WTC11 (cell line): ENCODE measurements at regions of chr1 and their contacts with region 1.

Region 1: GRCh38 chr1:54499360-54500106 is 48.5 kb upstream of the ACOT11 start:
- DNase-seq: peak; percentile 59
- ATAC-seq: peak; percentile 63
- H3K4me3 Mint-ChIP-seq: peak overlapping the region; percentile 71
- H3K27ac Mint-ChIP-seq: no peak overlapping the region
- H3K4me1 Mint-ChIP-seq: peaks cover 37% of the 10 kb centered on the region
- H3K27me3 Mint-ChIP-seq: no peaks in the 10 kb centered on the region; the same call in 1 of the 2 replicates
- CTCF ChIP-seq: no peak

Region 2: GRCh38 chr1:54453022-54453421 is 46.5 kb before region 1 on chr1:
- CTCF ChIA-PET with region 1: no interaction called
- POLR2A ChIA-PET with region 1: no interaction called
- DNase-seq: no peak
- ATAC-seq: no peak
- H3K4me3 Mint-ChIP-seq: no peak overlapping the region
- H3K27ac Mint-ChIP-seq: no peak overlapping the region
- H3K4me1 Mint-ChIP-seq: peaks cover 10% of the 10 kb centered on the region
- H3K27me3 Mint-ChIP-seq: peaks cover 5% of the 10 kb centered on the region
- CTCF ChIP-seq: no peak

Region 3: GRCh38 chr1:54471588-54471987 is 27.9 kb before region 1 on chr1:
- CTCF ChIA-PET with region 1: no interaction called
- POLR2A ChIA-PET with region 1: no interaction called
- DNase-seq: no peak
- ATAC-seq: peak; percentile 1; the same call in 1 of the 2 replicates
- H3K4me3 Mint-ChIP-seq: no peak overlapping the region
- H3K27ac Mint-ChIP-seq: no peak overlapping the region
- H3K4me1 Mint-ChIP-seq: peaks cover 58% of the 10 kb centered on the region
- H3K27me3 Mint-ChIP-seq: peaks cover 20% of the 10 kb centered on the region
- CTCF ChIP-seq: no peak

Region 4: DNA sequence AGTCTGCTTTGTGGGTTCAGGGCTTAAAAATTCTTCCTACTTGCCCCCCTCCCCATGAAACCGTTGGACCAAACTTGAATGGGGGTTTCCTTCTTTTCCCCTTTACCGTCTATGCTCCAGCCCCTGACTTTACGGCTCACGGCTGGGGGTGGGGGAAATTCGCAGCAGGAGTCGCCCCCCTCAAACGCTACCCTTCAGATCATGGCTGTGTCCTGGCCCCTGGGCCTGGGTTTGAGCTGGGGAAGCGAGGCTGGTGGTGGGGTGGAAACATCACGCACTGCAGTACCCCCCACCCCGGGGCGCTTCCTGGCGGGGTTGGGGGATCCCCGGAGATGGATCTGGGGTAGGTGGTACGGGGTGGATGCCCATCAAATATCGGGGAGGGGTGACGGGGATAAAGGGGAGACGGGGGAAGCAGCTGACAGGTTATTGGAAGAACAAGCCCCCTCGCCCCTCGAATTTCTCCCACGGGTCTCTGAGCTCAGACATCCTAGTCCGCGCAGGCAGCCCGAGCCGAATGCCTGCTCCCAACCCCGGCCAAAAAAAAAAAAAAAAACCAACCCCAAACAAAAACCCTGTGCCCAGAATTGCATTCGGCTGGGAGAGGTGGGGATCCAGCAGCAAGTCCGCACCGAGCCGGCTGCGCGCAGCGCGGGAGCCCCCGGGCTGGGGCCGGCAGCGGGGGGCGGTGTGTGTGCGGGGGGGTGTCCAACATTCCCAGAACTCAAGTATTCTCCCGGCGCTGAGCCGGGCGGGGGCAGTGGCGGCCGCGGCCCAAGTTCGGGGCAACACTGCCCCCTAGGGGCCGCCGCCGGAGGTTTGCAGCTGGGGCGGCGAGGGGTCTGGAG is 10.5 kb before region 1 on chr1:
- CTCF ChIA-PET with region 1: interaction called, 23 read pairs
- POLR2A ChIA-PET with region 1: interaction called, 5 read pairs
- DNase-seq: peak; percentile 91
- ATAC-seq: peak; percentile 49
- H3K4me3 Mint-ChIP-seq: peak overlapping the region; percentile 81
- H3K27ac Mint-ChIP-seq: peak overlapping the region; percentile 86
- H3K4me1 Mint-ChIP-seq: peaks cover 32% of the 10 kb centered on the region
- H3K27me3 Mint-ChIP-seq: peaks cover 13% of the 10 kb centered on the region
- CTCF ChIP-seq: peak; percentile 95

Region 5: DNA sequence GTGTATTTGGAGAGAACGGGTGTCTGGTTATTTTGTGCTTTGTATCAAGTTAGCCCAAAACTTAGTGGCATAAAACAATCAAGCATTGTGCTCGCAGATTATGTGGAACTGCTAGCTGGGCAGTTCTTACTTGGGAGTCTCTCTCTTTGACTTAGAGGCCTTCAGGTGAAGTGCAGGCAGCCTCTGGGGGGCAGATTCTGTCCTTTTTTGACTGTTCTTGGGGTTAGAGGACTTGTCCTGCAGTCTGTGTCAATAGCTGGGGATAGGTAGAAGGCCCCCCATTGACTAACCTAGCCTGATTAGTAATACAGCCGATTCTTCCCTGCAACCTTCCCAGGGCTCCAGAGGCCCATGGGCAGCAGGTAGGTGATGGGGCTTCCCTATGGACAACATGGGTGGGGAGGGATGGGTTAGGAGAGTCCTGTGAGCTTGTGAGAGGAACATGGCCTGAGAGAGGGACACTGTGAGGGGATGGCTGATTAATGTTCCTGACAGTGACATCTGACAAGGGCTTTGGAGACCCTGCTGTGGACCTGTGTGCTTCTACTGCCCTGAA is 11.3 kb after region 1 on chr1:
- CTCF ChIA-PET with region 1: interaction called, 12 read pairs
- POLR2A ChIA-PET with region 1: no interaction called
- DNase-seq: no peak
- ATAC-seq: no peak; the same call in 1 of the 2 replicates
- H3K4me3 Mint-ChIP-seq: no peak overlapping the region
- H3K27ac Mint-ChIP-seq: no peak overlapping the region
- H3K4me1 Mint-ChIP-seq: peaks cover 5% of the 10 kb centered on the region
- H3K27me3 Mint-ChIP-seq: no peaks in the 10 kb centered on the region
- CTCF ChIP-seq: no peak

Region 6: DNA sequence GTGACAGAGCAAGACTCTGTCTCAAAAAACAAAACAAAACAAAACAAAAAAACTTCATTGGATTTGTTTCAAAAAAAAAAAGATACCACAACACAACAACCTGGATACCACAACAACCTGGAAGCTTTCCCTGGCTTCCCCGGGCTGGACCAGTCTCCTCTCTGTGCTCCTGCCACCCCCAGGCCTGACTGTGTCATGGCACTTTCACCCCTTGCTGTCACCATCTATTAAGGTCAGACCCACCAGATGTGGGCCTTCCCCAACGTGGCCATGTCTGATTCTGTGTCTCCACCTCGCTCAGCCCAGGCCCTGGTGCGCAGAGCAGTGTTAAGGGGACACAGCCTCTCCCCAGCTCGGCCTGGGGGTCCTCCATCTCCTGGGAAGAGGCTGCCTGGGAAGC is 20.2 kb after region 1 on chr1:
- CTCF ChIA-PET with region 1: interaction called, 10 read pairs
- POLR2A ChIA-PET with region 1: no interaction called
- DNase-seq: peak; percentile 56
- ATAC-seq: peak; percentile 97
- H3K4me3 Mint-ChIP-seq: no peak overlapping the region
- H3K27ac Mint-ChIP-seq: no peak overlapping the region
- H3K4me1 Mint-ChIP-seq: no peaks in the 10 kb centered on the region
- H3K27me3 Mint-ChIP-seq: no peaks in the 10 kb centered on the region
- CTCF ChIP-seq: 0 out of 2 replicates have a peak, but pooled peaks have one; percentile 27

Region 7: DNA sequence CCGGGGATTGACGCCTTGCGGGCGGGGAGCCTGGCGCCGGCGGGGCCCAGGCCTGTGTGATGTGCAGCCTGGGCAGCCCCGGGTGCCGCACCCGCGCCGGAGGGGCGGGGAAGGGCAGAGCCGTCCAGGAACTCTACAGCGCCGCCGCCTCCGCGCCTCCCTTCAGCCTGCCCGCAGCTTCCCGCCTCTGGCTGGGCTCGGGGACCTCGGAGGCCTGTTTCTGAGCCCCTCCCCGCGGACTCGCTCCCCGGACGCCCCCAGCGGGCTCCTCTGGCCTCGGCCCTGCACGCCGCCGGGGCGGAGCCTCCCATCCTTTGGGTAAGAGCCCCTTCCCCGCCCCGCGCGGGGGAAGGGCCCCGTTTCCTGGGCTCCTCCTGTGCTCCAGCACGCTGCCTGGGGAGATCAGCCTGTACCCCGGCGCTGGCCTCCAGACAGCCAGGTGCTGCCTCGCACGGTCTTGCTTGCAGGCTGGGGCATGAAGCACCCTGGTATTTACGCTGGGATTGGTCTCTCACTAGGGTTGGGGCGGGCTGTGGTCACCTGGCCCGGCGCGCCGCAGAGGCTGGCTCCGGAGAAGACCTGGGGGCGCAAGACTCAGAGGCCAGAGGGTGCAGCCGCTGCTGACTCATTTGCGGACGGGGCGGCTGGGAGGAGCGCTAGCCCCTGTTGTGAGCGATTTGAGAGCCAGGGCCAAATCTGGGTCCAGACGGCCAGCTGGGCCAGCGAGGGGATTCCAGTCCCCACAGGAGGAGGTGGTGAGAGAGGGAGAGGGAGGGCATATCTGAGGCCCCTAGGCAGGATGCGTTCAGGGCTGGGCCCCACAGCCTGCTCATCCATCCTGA is 42.8 kb after region 1 on chr1:
- CTCF ChIA-PET with region 1: interaction called, 25 read pairs
- POLR2A ChIA-PET with region 1: no interaction called
- DNase-seq: peak; percentile 86
- ATAC-seq: peak; percentile 79
- H3K4me3 Mint-ChIP-seq: peak overlapping the region; percentile 77
- H3K27ac Mint-ChIP-seq: peak overlapping the region; percentile 87
- H3K4me1 Mint-ChIP-seq: peaks cover 29% of the 10 kb centered on the region
- H3K27me3 Mint-ChIP-seq: peaks cover 11% of the 10 kb centered on the region; the same call in 1 of the 2 replicates
- CTCF ChIP-seq: no peak

Region 8: DNA sequence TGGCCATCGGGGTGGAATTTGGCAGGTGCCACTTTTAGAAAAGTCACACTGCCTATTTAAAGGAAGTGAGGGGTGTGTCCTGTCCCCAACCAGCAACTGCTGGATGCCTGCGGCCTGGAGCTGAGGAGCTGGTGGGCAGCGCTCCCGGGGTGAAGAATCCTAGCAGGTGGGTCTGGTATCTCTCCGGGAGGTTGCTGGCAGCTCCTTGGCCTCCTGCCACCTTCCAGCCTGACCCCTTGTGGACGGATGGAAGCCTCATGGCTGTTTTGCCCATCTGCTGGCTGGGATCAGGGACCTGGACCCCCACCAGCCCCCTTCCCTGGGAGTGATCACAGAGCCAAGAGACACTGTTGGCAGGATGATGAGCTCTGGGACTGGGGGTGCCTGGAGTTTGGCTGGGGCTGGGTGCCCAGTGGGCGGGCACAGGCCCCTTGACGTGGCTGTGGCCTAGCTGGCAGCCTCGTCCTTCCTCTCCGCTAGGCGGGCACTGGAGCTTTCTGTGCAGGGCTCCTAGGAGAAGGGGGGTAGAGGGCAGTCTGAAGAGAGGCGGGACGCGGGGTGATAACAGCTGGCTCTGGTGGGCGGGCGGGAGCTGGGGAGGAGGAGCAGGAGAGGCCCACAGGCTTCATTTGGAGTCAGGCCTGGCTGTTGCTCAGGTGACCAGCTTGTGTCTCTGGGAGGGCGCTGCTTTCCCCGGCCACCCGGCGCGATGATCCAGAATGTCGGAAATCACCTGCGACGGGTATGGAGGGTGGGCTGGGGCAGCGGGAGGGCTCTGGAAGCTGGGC is 48.3 kb after region 1 on chr1 and contains the start of gene ACOT11:
- CTCF ChIA-PET with region 1: interaction called, 25 read pairs
- POLR2A ChIA-PET with region 1: interaction called, 3 read pairs
- DNase-seq: peak; percentile 45
- ATAC-seq: peak; percentile 85
- H3K4me3 Mint-ChIP-seq: no peak within 1 kb of the TSS
- H3K27ac Mint-ChIP-seq: no peak within 1 kb of the TSS
- H3K4me1 Mint-ChIP-seq: peaks cover 28% of the 10 kb centered on the region
- H3K27me3 Mint-ChIP-seq: no peaks in the 10 kb centered on the region
- CTCF ChIP-seq: no peak
- total RNA-seq, gene ACOT11: 3.8 to 4.4 TPM (median 4.2 TPM) in 3 replicates

Region 9: DNA sequence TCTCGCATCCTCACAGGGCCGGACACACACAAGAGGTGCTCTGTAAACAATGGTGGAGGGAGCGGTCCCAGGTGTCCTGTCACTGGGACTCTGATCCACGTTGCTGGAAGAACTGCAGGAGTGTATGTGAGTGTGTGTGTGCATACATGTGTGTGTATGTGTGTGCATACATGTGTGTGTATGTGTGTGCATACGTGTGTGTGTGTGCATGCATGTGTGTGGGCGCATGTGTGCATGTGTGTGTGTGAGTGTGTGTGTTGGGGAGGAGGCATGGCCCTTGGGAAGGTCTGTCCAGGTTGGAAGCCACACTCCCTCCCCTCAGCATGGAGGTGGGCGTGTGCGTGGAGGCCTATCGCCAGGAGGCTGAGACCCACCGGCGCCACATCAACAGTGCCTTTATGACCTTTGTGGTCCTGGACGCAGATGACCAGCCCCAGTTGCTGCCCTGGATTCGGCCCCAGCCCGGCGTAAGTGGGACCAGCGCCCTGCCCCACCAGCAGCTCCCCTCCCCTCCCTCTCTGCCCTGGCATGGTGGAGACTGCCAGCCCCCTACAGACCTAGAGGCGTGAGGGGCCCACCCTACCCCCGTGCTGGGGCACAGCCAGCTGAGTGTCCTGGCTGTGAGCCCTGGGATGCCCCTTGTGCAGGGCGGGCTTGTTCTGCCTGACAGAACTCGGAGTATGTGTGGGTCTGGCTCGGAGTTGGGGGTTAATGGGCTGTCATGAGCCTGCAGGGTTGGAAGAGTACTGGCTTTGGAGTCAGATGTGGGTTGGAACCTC is 101.6 kb after region 1 on chr1:
- CTCF ChIA-PET with region 1: no interaction called
- POLR2A ChIA-PET with region 1: no interaction called
- DNase-seq: no peak
- ATAC-seq: no peak
- H3K4me3 Mint-ChIP-seq: no peak overlapping the region
- H3K27ac Mint-ChIP-seq: no peak overlapping the region; the same call in 1 of the 2 replicates
- H3K4me1 Mint-ChIP-seq: peaks cover 14% of the 10 kb centered on the region
- H3K27me3 Mint-ChIP-seq: no peaks in the 10 kb centered on the region
- CTCF ChIP-seq: no peak

Region 10: DNA sequence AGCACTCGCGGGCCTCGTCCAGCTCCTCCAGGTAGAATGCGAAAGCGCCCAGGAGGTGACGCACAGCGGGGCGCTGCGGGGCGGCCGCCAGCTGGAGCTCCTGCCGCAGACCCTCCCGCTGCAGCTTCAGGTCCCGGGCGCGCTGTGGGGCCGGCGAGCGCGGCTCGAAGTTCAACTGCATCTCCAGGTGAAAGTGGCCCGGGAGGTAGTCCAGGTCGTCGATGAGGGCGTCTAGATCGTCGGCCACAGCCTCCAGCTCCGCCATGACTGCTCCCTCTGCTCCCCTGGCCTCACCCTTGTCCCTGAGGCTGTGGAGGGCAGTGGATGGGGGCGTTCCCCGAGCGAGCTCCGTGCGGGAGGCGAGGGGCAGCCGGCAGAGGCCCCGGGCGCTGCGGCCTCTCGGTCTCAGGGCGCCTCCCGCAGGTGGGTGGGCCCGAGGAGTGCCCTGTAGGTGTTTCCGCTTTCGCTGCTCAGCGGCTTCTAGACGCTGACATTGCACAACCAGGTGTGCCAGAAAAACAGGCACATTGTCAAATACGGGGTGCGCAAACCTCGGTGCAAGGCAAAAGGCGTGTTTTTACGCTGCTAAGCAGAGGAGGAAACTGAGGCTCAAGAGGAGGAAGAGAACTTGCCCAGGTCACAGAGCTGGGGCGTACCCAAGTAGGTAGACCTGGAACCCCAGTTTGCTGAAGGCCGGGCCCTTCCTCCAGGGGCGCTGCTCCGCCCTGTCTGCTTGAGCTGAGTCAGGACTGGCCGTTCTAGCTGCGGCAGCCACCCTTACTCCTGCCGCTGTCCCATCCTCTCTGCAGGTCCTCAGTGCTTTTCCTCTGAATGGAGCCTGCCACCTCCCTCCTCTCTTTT is 301.6 kb after region 1 on chr1 and contains the start of gene TTC22:
- CTCF ChIA-PET with region 1: interaction called, 10 read pairs
- POLR2A ChIA-PET with region 1: no interaction called
- DNase-seq: peak; percentile 58
- ATAC-seq: peak; percentile 89
- H3K4me3 Mint-ChIP-seq: peak within 1 kb of the TSS; percentile 31
- H3K27ac Mint-ChIP-seq: no peak within 1 kb of the TSS
- H3K4me1 Mint-ChIP-seq: 0 out of 2 replicates have a peak, but pooled peaks cover 6% of the 10 kb centered on the region
- H3K27me3 Mint-ChIP-seq: peaks cover 13% of the 10 kb centered on the region
- CTCF ChIP-seq: no peak
- total RNA-seq, gene TTC22: 0.63 to 0.99 TPM (median 0.69 TPM) in 3 replicates